Endothelial cell of umbilical vein (primary cell): ENCODE measurements at regions of chr3 and their contacts with region 1.

Region 1: DNA sequence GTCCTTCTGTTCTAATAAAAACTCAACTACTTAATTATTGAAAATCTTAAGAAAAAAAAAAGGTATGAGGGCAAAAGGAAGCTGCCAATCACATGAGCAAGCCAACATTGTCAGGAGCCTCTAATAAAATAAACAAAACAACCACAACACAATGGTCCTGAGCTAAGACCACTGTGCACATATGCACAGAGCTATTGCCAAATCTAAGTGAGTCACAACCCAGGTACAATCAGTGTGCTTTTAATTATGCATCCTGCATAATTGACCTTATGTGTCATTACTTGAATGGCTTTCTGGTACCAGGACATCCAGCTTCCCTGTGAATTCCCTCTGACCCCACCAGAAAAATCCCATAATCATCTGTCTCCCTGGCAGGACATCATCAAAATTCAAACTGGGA is 639.8 kb downstream of the MAGI1 start:
- DNase-seq: peak; percentile 73
- H3K4me3 ChIP-seq: no peak overlapping the region
- H3K27ac ChIP-seq: no peak overlapping the region
- H3K4me1 ChIP-seq: peaks cover 18% of the 10 kb centered on the region
- H3K27me3 ChIP-seq: no peaks in the 10 kb centered on the region
- CTCF ChIP-seq: no peak
- POLR2A ChIP-seq: no peak

Region 2: DNA sequence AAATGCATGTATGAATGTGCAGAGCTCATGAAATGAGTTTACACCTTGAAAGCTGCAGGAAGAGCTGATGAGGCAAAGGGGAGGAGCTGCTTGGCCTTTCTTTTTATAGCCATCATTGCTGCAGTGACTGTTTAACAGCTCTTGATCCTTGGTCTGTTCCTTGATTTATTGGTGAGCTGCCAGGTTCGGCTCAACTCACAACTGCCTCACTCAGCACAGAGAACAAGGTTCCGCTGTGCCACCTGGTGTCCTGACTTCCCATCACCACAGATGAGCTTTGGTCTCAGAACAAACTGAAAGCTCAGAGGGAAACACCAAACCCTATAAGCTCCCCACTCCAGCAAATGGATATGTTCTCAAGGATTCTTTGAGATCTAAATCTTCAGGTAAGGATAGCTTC is 13.6 kb after region 1 on chr3:
- CTCF ChIA-PET with region 1: interaction called, 11 read pairs
- POLR2A ChIA-PET with region 1: no interaction called
- dilution Hi-C with region 1: no loop called
- intact Hi-C with region 1: loop called (anchors 1 kb)
- DNase-seq: peak; percentile 18
- H3K4me3 ChIP-seq: no peak overlapping the region
- H3K27ac ChIP-seq: no peak overlapping the region
- H3K4me1 ChIP-seq: peaks cover 28% of the 10 kb centered on the region
- H3K27me3 ChIP-seq: no peaks in the 10 kb centered on the region
- CTCF ChIP-seq: no peak
- POLR2A ChIP-seq: no peak